Right ventricle myocardium superior (tissue), 1 donor: ENCODE measurements at regions of chr3 and their contacts with region 1.

Region 1: GRCh38 chr3:169662132-169662842 is 1.2 kb downstream of the MECOM start:
- DNase-seq: peak; percentile 79
- ATAC-seq: peak; percentile 89

Region 2: GRCh38 chr3:169149349-169149890 is 512.9 kb before region 1 on chr3:
- intact Hi-C with region 1: loop called (anchors 5 kb)
- DNase-seq: peak; percentile 88
- ATAC-seq: peak; percentile 89